ENCODE measurements at regions of chr2 and their contacts with region 1.

Region 1: DNA sequence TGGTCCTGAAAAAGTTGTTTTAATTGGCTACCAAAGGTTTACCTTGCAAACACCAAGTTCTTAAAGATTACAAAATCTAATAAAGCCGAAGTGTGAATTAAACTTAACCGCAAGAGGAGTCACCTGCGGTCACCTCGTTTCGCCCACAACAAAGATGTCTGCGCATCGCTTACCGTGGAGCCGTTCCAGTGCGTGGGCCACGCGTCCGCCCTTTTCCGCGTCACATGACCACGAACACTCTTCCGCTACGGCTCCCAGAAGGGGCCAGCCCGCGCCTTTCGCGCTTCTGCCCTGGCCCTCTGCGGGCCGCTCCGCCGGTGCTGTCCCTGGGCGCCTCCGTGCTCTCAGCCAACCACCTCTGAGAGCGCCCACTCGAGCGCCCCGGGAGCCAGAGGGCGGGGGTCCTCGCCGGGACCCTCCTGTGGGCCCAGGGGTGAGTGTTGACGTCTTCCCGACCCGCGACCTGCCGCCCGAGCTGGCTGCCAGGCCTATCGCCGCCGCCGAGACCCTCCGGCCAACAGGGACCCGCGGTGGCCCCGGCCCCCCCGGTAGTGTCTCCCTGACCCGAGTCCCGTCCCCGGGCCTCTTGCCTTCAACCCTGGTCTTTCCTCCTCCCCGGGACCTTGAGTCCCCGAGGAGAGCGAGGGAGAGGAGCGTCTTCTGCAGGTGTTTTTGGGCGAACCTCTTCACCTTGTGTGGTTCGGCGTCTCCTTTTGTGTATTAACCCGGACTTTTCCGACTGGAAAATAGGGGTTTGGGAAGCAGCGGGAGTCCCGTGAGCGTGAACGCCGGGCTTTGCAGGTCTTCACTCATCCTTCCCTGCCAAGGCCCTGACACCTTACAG is at the start of gene MFF:
- DNase-seq: peak; percentile 84 to 97 (median 90)
- ATAC-seq: peak; percentile 97
- H3K4me3 ChIP-seq: peak within 1 kb of the TSS; percentile 82
- H3K4me3 Mint-ChIP-seq: peak within 1 kb of the TSS; percentile 94
- H3K27ac ChIP-seq: peak within 1 kb of the TSS; percentile 33 to 51
- H3K27ac Mint-ChIP-seq: peak within 1 kb of the TSS; percentile 92
- H3K4me1 ChIP-seq: peaks cover 22% of the 10 kb centered on the region
- H3K4me1 Mint-ChIP-seq: peaks cover 57% of the 10 kb centered on the region
- H3K27me3 ChIP-seq: no peaks in the 10 kb centered on the region
- H3K27me3 Mint-ChIP-seq: no peaks in the 10 kb centered on the region
- CTCF ChIP-seq: peak; percentile 36
- total RNA-seq, gene MFF: 46.9 to 51.8 TPM

Region 2: GRCh38 chr2:227280895-227281294 is 44.3 kb before region 1 on chr2:
- CTCF ChIA-PET with region 1: no interaction called
- POLR2A ChIA-PET with region 1: no interaction called
- intact Hi-C with region 1: no loop called
- DNase-seq: no peak
- ATAC-seq: no peak
- H3K4me3 ChIP-seq: no peak overlapping the region
- H3K4me3 Mint-ChIP-seq: no peak overlapping the region
- H3K27ac ChIP-seq: no peak overlapping the region
- H3K27ac Mint-ChIP-seq: no peak overlapping the region
- H3K4me1 ChIP-seq: no peaks in the 10 kb centered on the region
- H3K4me1 Mint-ChIP-seq: no peaks in the 10 kb centered on the region
- H3K27me3 ChIP-seq: no peaks in the 10 kb centered on the region
- H3K27me3 Mint-ChIP-seq: no peaks in the 10 kb centered on the region
- CTCF ChIP-seq: no peak

Region 3: GRCh38 chr2:227515742-227516141 is 190.5 kb after region 1 on chr2:
- CTCF ChIA-PET with region 1: no interaction called
- POLR2A ChIA-PET with region 1: no interaction called
- intact Hi-C with region 1: loop called in 1 of 2 experiments (anchors 5 kb)
- DNase-seq: no peak
- ATAC-seq: no peak
- H3K4me3 ChIP-seq: no peak overlapping the region
- H3K4me3 Mint-ChIP-seq: no peak overlapping the region
- H3K27ac ChIP-seq: no peak overlapping the region
- H3K27ac Mint-ChIP-seq: peak overlapping the region; percentile 15
- H3K4me1 ChIP-seq: peaks cover 9% of the 10 kb centered on the region
- H3K4me1 Mint-ChIP-seq: peaks cover 88% of the 10 kb centered on the region
- H3K27me3 ChIP-seq: no peaks in the 10 kb centered on the region
- H3K27me3 Mint-ChIP-seq: no peaks in the 10 kb centered on the region
- CTCF ChIP-seq: no peak